Vagina (tissue), 2 donors: ENCODE measurements at regions of chr1 and their contacts with region 1.

Region 1: GRCh38 chr1:146012737-146013403 is 8.7 kb downstream of the HJV start:
- DNase-seq: no peak
- H3K4me3 ChIP-seq: no peak overlapping the region
- H3K27ac ChIP-seq: no peak overlapping the region
- H3K4me1 ChIP-seq: no peaks in the 10 kb centered on the region
- H3K27me3 ChIP-seq: no peaks in the 10 kb centered on the region
- CTCF ChIP-seq: peak; percentile 62 to 87 (median 80)
- POLR2A ChIP-seq: no peak

Region 2: GRCh38 chr1:145978854-145979759 is 33.8 kb before region 1 on chr1:
- intact Hi-C with region 1: loop called (anchors 1 kb)
- DNase-seq: peak in 1 of 2 donors; percentile 100
- H3K4me3 ChIP-seq: peak overlapping the region; percentile 24 to 45
- H3K27ac ChIP-seq: peak overlapping the region; percentile 95
- H3K4me1 ChIP-seq: peaks cover 52% of the 10 kb centered on the region
- H3K27me3 ChIP-seq: no peaks in the 10 kb centered on the region
- CTCF ChIP-seq: no peak
- POLR2A ChIP-seq: peak; percentile 8 to 68